ENCODE measurements at regions of chr10 and their contacts with region 1.

Region 1: GRCh38 chr10:28367929-28368484 is 65.1 kb upstream of the MPP7 start:
- H3K4me3 Mint-ChIP-seq: peak overlapping the region; percentile 55
- H3K27ac Mint-ChIP-seq: peak overlapping the region; percentile 43
- H3K4me1 Mint-ChIP-seq: peaks cover 43% of the 10 kb centered on the region
- H3K27me3 Mint-ChIP-seq: peaks cover 7% of the 10 kb centered on the region

Region 2: DNA sequence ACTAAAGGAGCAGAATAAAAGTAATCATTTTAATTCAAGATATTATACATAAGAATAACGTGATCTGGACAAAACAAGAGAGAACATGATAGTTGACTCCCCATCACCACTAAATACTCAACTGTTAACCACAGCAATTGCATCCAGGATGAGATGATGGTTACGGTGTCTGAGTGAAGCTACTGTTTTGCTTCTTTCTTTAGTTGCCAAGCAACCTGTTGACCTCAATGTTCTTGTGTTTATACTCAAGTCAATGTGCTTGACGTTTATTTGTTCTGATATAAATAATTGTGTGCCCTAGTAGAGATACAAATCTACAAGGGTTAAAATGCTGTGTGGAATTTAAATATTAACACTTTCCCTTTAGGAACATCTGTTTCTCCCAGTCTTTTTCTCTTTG is 33.7 kb before region 1 on chr10:
- intact Hi-C with region 1: loop called (anchors 5 kb)
- H3K4me3 Mint-ChIP-seq: no peak overlapping the region
- H3K27ac Mint-ChIP-seq: peak overlapping the region; percentile 56
- H3K4me1 Mint-ChIP-seq: peaks cover 17% of the 10 kb centered on the region
- H3K27me3 Mint-ChIP-seq: no peaks in the 10 kb centered on the region

Measured in dendritic cell treated with granulocyte-macrophage colony-stimulating factor and Interleukin-4, amounts not matched to agents 40 ng/mL and 50 ng/mL, for 4 days (primary cell).